ENCODE measurements at regions of chr2 and their contacts with region 1.

Region 1: DNA sequence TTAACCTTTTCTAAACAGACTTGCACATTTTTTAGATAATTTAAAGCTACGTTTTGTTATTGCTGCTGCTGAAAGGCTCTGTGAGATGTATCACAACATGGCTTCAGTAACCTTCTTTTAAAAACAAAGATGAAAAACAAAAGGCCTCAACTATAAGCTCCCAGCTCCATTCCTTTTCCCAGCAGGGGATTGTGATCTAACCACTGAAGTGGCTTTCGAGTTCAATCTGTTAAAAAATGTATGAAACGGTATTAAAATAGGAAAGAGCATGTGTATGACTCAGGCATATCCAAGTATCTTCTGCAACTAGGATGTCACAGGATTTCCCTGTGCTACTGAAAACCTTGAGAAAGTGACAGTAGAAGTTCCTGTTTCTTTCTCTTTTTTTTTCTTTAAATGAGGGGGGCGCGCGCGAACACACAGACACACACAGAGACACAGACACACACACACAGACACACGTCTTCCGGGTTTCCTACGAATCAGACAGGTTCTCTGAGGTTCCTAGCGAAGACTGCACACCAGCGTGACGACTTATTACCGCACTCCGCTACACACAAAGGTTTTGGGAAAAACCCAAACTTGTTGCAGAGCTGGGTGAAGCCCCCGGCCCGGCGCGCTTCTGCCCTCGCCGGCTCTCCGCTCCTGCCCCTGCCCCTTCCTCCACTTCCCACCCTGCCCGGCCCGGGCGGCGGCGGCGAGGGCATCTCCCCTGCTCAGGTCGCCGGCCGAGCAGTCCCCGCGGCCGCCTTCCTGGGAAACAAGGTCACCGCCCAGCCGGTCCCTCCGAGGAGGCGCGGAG is 86.8 kb downstream of the RBMS1 start:
- DNase-seq: peak; percentile 56 to 97 (median 74)
- ATAC-seq: peak; percentile 84
- H3K4me3 ChIP-seq: peak overlapping the region; percentile 52 to 70
- H3K4me3 Mint-ChIP-seq: peak overlapping the region; percentile 93
- H3K27ac ChIP-seq: peak overlapping the region; percentile 73
- H3K27ac Mint-ChIP-seq: peak overlapping the region; percentile 98
- H3K4me1 ChIP-seq: peaks cover 73% of the 10 kb centered on the region
- H3K4me1 Mint-ChIP-seq: peaks cover 82% of the 10 kb centered on the region
- H3K27me3 ChIP-seq: no peaks in the 10 kb centered on the region
- H3K27me3 Mint-ChIP-seq: no peaks in the 10 kb centered on the region
- CTCF ChIP-seq: no peak

Region 2: DNA sequence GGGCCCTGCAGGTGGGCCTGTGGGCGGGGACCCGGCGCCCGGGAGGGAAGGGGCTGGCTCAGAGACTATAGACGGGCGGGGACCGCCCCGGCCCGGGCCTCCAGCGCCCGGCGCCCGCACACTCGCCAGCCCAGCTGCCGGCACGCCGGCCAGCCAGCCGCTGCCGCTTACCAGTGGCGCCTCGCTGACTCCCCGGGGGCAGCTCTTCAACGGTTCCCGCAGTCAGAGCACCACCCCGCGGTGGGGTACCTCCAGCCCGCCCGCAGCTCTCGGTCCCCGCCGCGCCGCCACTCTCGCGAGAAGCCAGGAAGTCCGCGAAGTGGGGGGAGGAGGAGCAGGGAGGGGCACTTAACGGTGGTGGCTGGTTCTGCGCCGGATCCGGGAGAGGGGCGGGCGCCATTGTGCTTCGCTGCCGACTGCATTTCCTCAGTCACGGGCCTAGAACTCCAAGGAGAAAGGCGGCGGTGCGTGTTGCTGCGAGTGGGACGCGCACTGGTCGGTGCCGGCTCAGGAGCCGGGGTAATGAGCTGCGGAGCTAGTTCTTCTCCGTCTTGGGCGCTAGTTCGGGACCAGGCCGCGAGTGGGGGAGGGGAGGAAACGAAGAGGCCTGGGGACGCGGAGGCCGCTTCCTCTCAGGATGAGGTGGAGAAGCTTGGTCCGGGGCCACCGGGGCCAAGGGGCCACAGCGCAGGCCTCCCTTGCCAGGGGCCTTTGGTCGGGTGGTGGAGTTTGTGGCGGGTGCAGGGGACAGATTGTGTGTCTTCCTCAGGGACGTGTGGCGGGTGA is 694.5 kb before region 1 on chr2 and contains the start of gene MARCHF7:
- CTCF ChIA-PET with region 1: no interaction called
- POLR2A ChIA-PET with region 1: no interaction called
- intact Hi-C with region 1: loop called in 1 of 2 experiments (anchors 5 kb)
- DNase-seq: peak; percentile 94 to 99 (median 97)
- ATAC-seq: peak; percentile 90
- H3K4me3 ChIP-seq: peak within 1 kb of the TSS; percentile 100
- H3K4me3 Mint-ChIP-seq: peak within 1 kb of the TSS; percentile 100
- H3K27ac ChIP-seq: peak within 1 kb of the TSS; percentile 98
- H3K27ac Mint-ChIP-seq: peak within 1 kb of the TSS; percentile 100
- H3K4me1 ChIP-seq: peaks cover 45% of the 10 kb centered on the region
- H3K4me1 Mint-ChIP-seq: peaks cover 54% of the 10 kb centered on the region
- H3K27me3 ChIP-seq: no peaks in the 10 kb centered on the region
- H3K27me3 Mint-ChIP-seq: no peaks in the 10 kb centered on the region
- CTCF ChIP-seq: peak; percentile 25
- total RNA-seq, gene MARCHF7: 76.5 to 76.6 TPM

Region 3: GRCh38 chr2:160387558-160388262 is 19.1 kb before region 1 on chr2:
- CTCF ChIA-PET with region 1: interaction called, 4 read pairs
- POLR2A ChIA-PET with region 1: interaction called, 10 read pairs
- intact Hi-C with region 1: loop called in 1 of 2 experiments (anchors 2 kb)
- DNase-seq: no peak
- ATAC-seq: peak; percentile 45
- H3K4me3 ChIP-seq: no peak overlapping the region
- H3K4me3 Mint-ChIP-seq: peak overlapping the region; percentile 54
- H3K27ac ChIP-seq: peak overlapping the region in 1 of 2 experiments; percentile 42
- H3K27ac Mint-ChIP-seq: peak overlapping the region; percentile 82
- H3K4me1 ChIP-seq: peaks cover 72% of the 10 kb centered on the region
- H3K4me1 Mint-ChIP-seq: peaks cover 88% of the 10 kb centered on the region
- H3K27me3 ChIP-seq: no peaks in the 10 kb centered on the region
- H3K27me3 Mint-ChIP-seq: no peaks in the 10 kb centered on the region
- CTCF ChIP-seq: no peak

Region 4: GRCh38 chr2:160423126-160423525 is 16.3 kb after region 1 on chr2:
- CTCF ChIA-PET with region 1: interaction called, 16 read pairs
- POLR2A ChIA-PET with region 1: interaction called, 32 read pairs
- intact Hi-C with region 1: loop called (anchors 1 to 2 kb)
- DNase-seq: no peak
- ATAC-seq: no peak
- H3K4me3 ChIP-seq: no peak overlapping the region
- H3K4me3 Mint-ChIP-seq: no peak overlapping the region
- H3K27ac ChIP-seq: no peak overlapping the region
- H3K27ac Mint-ChIP-seq: peak overlapping the region; percentile 58
- H3K4me1 ChIP-seq: peaks cover 40% of the 10 kb centered on the region
- H3K4me1 Mint-ChIP-seq: peaks cover 75% of the 10 kb centered on the region
- H3K27me3 ChIP-seq: no peaks in the 10 kb centered on the region
- H3K27me3 Mint-ChIP-seq: no peaks in the 10 kb centered on the region
- CTCF ChIP-seq: no peak

Region 5: DNA sequence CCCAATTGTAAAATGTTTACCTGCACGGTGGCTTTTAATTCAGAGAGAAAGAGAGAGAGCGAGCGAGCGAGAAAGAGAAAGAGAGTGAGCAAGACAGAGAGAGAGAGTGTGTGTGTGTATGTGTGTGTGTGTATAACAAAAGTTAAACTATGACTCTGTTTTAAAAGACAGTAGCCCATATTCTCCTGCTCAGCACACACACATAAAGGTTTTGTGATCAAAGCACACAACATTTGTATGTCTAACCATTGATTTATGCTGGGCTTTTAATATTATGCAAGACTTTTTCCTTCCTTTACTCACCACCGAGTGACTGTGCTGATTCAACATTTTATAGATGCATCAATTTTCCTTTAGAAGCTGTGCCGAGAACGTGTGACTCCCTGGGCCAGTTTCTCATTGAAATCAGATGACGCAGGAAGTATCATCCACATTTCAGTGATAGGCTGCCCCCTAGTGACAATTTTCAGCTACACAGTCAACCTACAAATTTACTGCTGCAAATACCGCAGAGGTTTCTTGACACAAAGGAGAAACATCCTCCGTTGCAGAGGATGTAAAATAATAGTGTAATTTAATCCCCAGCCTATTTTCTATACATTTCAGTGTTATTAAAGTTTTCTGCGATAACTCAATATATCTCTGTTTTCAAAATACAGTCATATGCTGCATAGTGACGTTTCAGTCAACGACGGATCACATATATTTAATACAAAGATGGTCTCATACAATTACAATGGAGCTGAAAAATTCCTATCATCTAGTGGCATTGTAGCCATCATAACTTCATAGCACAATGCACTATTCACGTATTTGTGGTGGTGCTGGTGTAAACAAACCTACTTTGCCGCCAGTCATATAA is 587.6 kb after region 1 on chr2:
- CTCF ChIA-PET with region 1: interaction called, 4 read pairs
- POLR2A ChIA-PET with region 1: no interaction called
- intact Hi-C with region 1: loop called in 1 of 2 experiments (anchors 1 kb)
- DNase-seq: peak; percentile 39 to 85 (median 71)
- ATAC-seq: peak; percentile 96
- H3K4me3 ChIP-seq: no peak overlapping the region
- H3K4me3 Mint-ChIP-seq: peak overlapping the region; percentile 40
- H3K27ac ChIP-seq: no peak overlapping the region
- H3K27ac Mint-ChIP-seq: peak overlapping the region; percentile 15
- H3K4me1 ChIP-seq: no peaks in the 10 kb centered on the region
- H3K4me1 Mint-ChIP-seq: peaks cover 10% of the 10 kb centered on the region
- H3K27me3 ChIP-seq: no peaks in the 10 kb centered on the region
- H3K27me3 Mint-ChIP-seq: no peaks in the 10 kb centered on the region
- CTCF ChIP-seq: peak; percentile 86